B cell (primary cell): ENCODE measurements at regions of chr3 and their contacts with region 1.

Region 1: GRCh38 chr3:150787741-150788370 is 24.9 kb upstream of the SIAH2 start:
- DNase-seq: peak; percentile 81
- ATAC-seq: peak; percentile 87
- H3K4me3 ChIP-seq: peak overlapping the region in 1 of 5 experiments; percentile 17
- H3K4me3 Mint-ChIP-seq: no peak overlapping the region
- H3K27ac ChIP-seq: no peak overlapping the region
- H3K27ac Mint-ChIP-seq: no peak overlapping the region
- H3K4me1 ChIP-seq: no peaks in the 10 kb centered on the region
- H3K4me1 Mint-ChIP-seq: peaks cover 6% of the 10 kb centered on the region
- H3K27me3 ChIP-seq: peaks cover 0 to 5% (median 1%) of the 10 kb centered on the region in 4 experiments
- H3K27me3 Mint-ChIP-seq: peaks cover 16% of the 10 kb centered on the region
- CTCF ChIP-seq: peak; percentile 95

Region 2: GRCh38 chr3:150216041-150216811 is 571.6 kb before region 1 on chr3:
- CTCF ChIA-PET with region 1: no interaction called
- POLR2A ChIA-PET with region 1: no interaction called
- intact Hi-C with region 1: no loop called
- DNase-seq: no peak
- ATAC-seq: no peak
- H3K4me3 ChIP-seq: no peak overlapping the region
- H3K4me3 Mint-ChIP-seq: no peak overlapping the region
- H3K27ac ChIP-seq: no peak overlapping the region
- H3K27ac Mint-ChIP-seq: no peak overlapping the region
- H3K4me1 ChIP-seq: peaks cover 6 to 10% of the 10 kb centered on the region in 2 donors
- H3K4me1 Mint-ChIP-seq: peaks cover 9% of the 10 kb centered on the region
- H3K27me3 ChIP-seq: peaks cover 0 to 15% (median 6%) of the 10 kb centered on the region in 4 experiments
- H3K27me3 Mint-ChIP-seq: peaks cover 44% of the 10 kb centered on the region
- CTCF ChIP-seq: no peak

Region 3: GRCh38 chr3:150721285-150722130 is 66.3 kb before region 1 on chr3:
- CTCF ChIA-PET with region 1: interaction called, 19 read pairs
- POLR2A ChIA-PET with region 1: no interaction called
- intact Hi-C with region 1: loop called (anchors 1 kb)
- DNase-seq: peak; percentile 82
- ATAC-seq: peak; percentile 95
- H3K4me3 ChIP-seq: no peak overlapping the region
- H3K4me3 Mint-ChIP-seq: no peak overlapping the region
- H3K27ac ChIP-seq: no peak overlapping the region
- H3K27ac Mint-ChIP-seq: no peak overlapping the region
- H3K4me1 ChIP-seq: peaks cover 0 to 5% of the 10 kb centered on the region in 2 donors
- H3K4me1 Mint-ChIP-seq: peaks cover 2% of the 10 kb centered on the region
- H3K27me3 ChIP-seq: no peaks in the 10 kb centered on the region
- H3K27me3 Mint-ChIP-seq: no peaks in the 10 kb centered on the region
- CTCF ChIP-seq: peak; percentile 89

Region 4: GRCh38 chr3:150733373-150733935 is 54.4 kb before region 1 on chr3:
- CTCF ChIA-PET with region 1: no interaction called
- POLR2A ChIA-PET with region 1: no interaction called
- intact Hi-C with region 1: no loop called
- DNase-seq: no peak
- ATAC-seq: no peak
- H3K4me3 ChIP-seq: no peak overlapping the region
- H3K4me3 Mint-ChIP-seq: no peak overlapping the region
- H3K27ac ChIP-seq: no peak overlapping the region
- H3K27ac Mint-ChIP-seq: no peak overlapping the region
- H3K4me1 ChIP-seq: peaks cover 3 to 8% of the 10 kb centered on the region in 2 donors
- H3K4me1 Mint-ChIP-seq: peaks cover 17% of the 10 kb centered on the region
- H3K27me3 ChIP-seq: no peaks in the 10 kb centered on the region
- H3K27me3 Mint-ChIP-seq: no peaks in the 10 kb centered on the region
- CTCF ChIP-seq: no peak

Region 5: GRCh38 chr3:150775091-150775501 is 12.8 kb before region 1 on chr3:
- CTCF ChIA-PET with region 1: interaction called, 14 read pairs
- POLR2A ChIA-PET with region 1: no interaction called
- intact Hi-C with region 1: no loop called
- DNase-seq: no peak
- ATAC-seq: no peak
- H3K4me3 ChIP-seq: no peak overlapping the region
- H3K4me3 Mint-ChIP-seq: no peak overlapping the region
- H3K27ac ChIP-seq: no peak overlapping the region
- H3K27ac Mint-ChIP-seq: no peak overlapping the region
- H3K4me1 ChIP-seq: no peaks in the 10 kb centered on the region
- H3K4me1 Mint-ChIP-seq: no peaks in the 10 kb centered on the region
- H3K27me3 ChIP-seq: no peaks in the 10 kb centered on the region
- H3K27me3 Mint-ChIP-seq: peaks cover 3% of the 10 kb centered on the region
- CTCF ChIP-seq: no peak

Region 6: DNA sequence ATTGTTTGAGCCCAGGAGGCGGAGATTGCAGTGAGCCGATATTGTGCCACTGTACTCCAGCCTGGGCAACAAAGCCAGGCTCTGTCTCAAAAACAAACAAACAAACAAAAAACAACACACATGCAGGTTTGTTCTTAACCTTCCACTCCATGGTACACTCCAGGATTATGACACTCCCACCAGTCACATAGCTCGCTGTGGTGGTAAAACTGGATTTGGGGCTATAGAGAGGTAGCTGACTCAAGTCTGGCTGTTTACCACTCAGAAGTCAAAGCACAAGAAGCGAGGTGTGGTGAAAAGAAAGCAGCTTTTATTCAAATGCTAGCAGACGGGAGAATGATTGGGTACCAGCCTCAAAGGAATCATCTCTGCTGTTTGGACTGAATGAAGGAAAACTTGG is 24.1 kb after region 1 on chr3:
- CTCF ChIA-PET with region 1: interaction called, 11 read pairs
- POLR2A ChIA-PET with region 1: no interaction called
- intact Hi-C with region 1: no loop called
- DNase-seq: no peak
- ATAC-seq: no peak
- H3K4me3 ChIP-seq: no peak overlapping the region
- H3K4me3 Mint-ChIP-seq: no peak overlapping the region
- H3K27ac ChIP-seq: no peak overlapping the region
- H3K27ac Mint-ChIP-seq: no peak overlapping the region
- H3K4me1 ChIP-seq: no peaks in the 10 kb centered on the region
- H3K4me1 Mint-ChIP-seq: no peaks in the 10 kb centered on the region
- H3K27me3 ChIP-seq: peaks cover 0 to 5% (median 1%) of the 10 kb centered on the region in 4 experiments
- H3K27me3 Mint-ChIP-seq: peaks cover 9% of the 10 kb centered on the region
- CTCF ChIP-seq: no peak

Region 7: GRCh38 chr3:150870396-150870795 is 82.5 kb after region 1 on chr3:
- CTCF ChIA-PET with region 1: interaction called, 13 read pairs
- POLR2A ChIA-PET with region 1: no interaction called
- intact Hi-C with region 1: loop called (anchors 1 kb)
- DNase-seq: no peak
- ATAC-seq: no peak
- H3K4me3 ChIP-seq: no peak overlapping the region
- H3K4me3 Mint-ChIP-seq: no peak overlapping the region
- H3K27ac ChIP-seq: no peak overlapping the region
- H3K27ac Mint-ChIP-seq: no peak overlapping the region
- H3K4me1 ChIP-seq: no peaks in the 10 kb centered on the region
- H3K4me1 Mint-ChIP-seq: peaks cover under 1% of the 10 kb centered on the region
- H3K27me3 ChIP-seq: no peaks in the 10 kb centered on the region
- H3K27me3 Mint-ChIP-seq: peaks cover 17% of the 10 kb centered on the region
- CTCF ChIP-seq: no peak

Region 8: DNA sequence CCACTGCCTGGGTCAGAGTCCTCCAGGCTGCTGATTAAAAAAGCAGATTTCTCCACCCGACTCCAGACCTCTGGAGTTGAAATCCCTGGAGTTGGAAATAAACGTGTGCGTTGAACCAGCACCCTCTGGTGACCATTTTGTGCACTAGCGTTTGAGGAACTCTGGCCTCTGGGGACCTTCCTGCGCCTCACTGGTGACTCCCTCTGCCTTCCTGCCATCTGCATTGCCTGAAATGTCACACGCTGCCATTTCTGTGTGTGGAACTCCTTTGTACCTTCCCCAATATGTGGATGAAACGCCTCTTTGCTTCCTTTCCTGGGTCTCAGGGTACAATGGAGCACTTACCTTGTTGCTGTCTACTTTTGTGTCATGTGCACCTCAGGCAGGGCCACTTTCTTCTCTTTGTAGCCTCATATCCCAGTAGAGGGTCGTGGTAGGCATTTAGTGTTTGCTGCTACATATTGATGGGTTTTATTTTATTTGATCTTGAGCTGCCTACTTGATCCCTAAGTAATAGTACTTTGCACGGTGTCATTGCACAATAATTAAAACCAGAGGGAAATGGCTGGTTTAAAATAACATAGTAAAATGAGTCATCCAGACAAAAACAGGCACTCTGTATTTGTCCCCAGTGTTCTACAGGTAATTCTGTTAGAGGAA is 358.3 kb after region 1 on chr3:
- CTCF ChIA-PET with region 1: interaction called, 14 read pairs
- POLR2A ChIA-PET with region 1: no interaction called
- intact Hi-C with region 1: loop called (anchors 1 kb)
- DNase-seq: peak; percentile 80
- ATAC-seq: peak; percentile 99
- H3K4me3 ChIP-seq: peak overlapping the region in 3 of 5 experiments; percentile 7 to 48 (median 29)
- H3K4me3 Mint-ChIP-seq: no peak overlapping the region
- H3K27ac ChIP-seq: no peak overlapping the region
- H3K27ac Mint-ChIP-seq: no peak overlapping the region
- H3K4me1 ChIP-seq: peaks cover 9 to 17% of the 10 kb centered on the region in 2 donors
- H3K4me1 Mint-ChIP-seq: peaks cover 4% of the 10 kb centered on the region
- H3K27me3 ChIP-seq: peaks cover 0 to 4% (median 0%) of the 10 kb centered on the region in 4 experiments
- H3K27me3 Mint-ChIP-seq: peaks cover 3% of the 10 kb centered on the region
- CTCF ChIP-seq: peak; percentile 86